Psoas muscle (tissue), 8 donors: ENCODE measurements at regions of chr1 and their contacts with region 1.

Region 1: DNA sequence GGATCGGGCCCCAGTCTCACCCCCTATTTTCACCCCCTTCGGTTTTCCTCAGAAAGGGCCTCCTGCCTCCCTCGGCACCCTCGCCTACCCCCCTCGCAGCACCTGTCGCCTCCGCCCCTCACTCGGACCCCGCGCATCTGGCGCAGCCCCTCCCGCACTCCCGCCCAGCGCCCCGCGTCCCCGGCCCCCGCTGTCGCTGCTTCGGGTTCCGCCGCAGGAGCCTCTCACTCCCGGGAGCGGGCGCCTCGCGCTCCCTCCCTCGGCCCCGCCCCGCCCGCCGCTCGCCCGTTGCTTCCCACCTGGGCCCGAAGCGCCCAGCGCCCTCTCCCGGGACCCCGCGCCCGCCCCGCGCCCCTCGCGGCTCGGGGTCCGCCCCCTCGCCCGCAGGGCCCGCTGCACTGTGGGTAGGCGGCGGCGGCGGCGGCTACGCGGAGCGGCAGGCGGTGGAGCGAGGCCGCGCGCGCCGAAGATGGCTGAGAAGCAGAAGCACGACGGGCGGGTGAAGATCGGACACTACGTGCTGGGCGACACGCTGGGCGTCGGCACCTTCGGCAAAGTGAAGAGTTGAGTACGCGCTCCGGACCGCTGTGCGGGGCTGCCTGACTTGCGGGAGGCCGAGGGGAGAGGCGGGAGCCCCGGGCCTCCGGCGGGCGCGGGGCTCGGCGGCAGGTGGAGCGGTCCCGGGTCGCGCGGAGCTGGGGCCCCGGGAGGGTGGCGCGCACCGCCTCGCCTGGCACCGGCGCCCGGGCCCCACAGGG is at the start of gene PRKAA2:
- DNase-seq: peak; percentile 49 to 81
- ATAC-seq: peak; percentile 75 to 87 (median 82)
- H3K4me3 ChIP-seq: peak within 1 kb of the TSS; percentile 82
- H3K27ac ChIP-seq: peak within 1 kb of the TSS; percentile 94
- H3K4me1 ChIP-seq: peaks cover 18% of the 10 kb centered on the region
- H3K27me3 ChIP-seq: no peaks in the 10 kb centered on the region
- CTCF ChIP-seq: no peak
- total RNA-seq, gene PRKAA2: 48.4 to 101 (median 63.0) TPM

Region 2: DNA sequence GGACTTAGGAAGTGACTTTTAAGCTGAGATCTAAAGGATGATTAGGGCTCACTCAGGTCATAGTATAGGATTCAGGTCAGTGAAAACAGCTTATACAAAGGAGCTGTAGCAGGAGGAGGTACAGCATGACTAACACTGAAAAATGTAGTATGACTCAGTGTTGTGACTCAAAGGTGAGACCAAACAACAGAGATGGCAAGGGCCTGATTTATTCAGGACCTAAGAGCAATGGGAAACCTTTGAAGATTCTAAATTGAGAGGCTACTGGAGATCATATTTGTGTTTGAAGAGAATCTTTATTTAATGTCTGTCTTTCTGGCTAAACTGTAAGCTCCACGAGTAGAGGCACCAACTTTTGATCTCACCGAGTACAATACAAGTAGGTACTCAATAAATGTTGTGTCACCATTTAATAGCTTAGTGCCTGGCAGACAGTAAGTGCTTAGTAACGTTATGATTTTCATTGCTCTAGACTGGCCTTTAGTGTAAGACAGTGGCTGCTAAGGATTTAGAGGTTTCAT is 43.5 kb after region 1 on chr1:
- intact Hi-C with region 1: loop called in 1 of 2 experiments (anchors 5 kb)
- DNase-seq: no peak
- ATAC-seq: peak; percentile 93 to 99 (median 97)
- H3K4me3 ChIP-seq: peak overlapping the region; percentile 6
- H3K27ac ChIP-seq: peak overlapping the region; percentile 78
- H3K4me1 ChIP-seq: peaks cover 33% of the 10 kb centered on the region
- H3K27me3 ChIP-seq: no peaks in the 10 kb centered on the region
- CTCF ChIP-seq: no peak

Region 3: DNA sequence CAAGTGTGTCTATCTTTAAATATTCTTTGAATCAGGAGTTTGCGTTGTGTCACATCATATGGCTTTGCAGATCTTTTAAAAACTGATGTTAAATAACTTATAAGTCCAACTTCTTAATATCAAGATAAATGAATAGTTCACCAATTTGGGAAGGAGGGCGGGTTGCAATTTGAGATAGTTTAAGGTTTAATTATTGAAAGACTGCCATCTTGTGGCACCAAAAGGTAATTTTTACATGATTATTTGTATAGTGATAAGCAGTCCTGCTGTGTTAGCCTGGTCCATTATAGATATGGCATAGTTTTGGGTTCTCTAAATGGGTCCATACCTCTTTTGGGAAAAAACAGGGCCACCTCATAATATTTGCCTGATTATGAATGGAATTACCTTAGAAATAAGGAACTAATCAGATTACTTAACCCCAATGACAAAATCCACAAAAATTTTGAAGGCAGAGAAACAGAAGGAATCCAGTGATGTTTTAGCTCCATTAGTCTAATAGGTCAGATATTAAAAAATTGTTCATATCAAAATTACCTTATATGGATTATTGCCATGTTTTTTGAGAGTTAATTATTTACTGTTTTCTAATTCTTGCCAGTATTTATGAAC is 64.3 kb after region 1 on chr1:
- intact Hi-C with region 1: loop called (anchors 5 kb)
- DNase-seq: no peak
- ATAC-seq: peak; percentile 57 to 81 (median 72)
- H3K4me3 ChIP-seq: no peak overlapping the region
- H3K27ac ChIP-seq: peak overlapping the region; percentile 14
- H3K4me1 ChIP-seq: peaks cover 4% of the 10 kb centered on the region
- H3K27me3 ChIP-seq: no peaks in the 10 kb centered on the region
- CTCF ChIP-seq: peak; percentile 73

Region 4: DNA sequence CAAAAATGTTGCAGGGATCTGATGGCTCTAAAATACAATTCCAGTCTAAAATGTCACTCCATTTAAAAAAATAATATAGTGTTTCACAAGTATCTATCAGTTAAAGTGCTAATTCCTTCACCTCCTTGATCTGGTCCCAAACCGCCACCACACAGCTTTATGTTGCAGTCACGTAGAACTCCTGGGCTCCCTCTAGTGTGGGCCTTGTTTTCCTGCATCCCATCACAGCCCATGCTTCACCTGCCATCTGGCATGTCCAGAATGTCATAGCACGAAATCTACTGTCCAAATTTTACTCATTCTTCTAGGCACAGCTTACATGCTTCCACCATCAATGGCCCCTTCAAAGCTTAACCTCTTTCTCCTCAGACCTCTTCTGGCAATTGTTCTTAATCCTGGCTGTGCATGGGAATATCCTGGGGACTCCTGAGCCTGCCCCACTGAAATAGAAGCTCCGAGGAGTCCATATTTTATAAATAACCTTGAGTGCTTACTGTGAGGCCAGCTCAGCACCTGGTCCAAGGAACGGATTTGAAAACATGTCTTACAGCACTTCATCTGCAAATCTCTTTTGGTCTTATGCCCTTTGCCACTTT is 158.6 kb after region 1 on chr1:
- intact Hi-C with region 1: no loop called
- DNase-seq: no peak
- ATAC-seq: peak in 2 of 4 donors; percentile 36 to 41
- H3K4me3 ChIP-seq: no peak overlapping the region
- H3K27ac ChIP-seq: no peak overlapping the region
- H3K4me1 ChIP-seq: peaks cover 25% of the 10 kb centered on the region
- H3K27me3 ChIP-seq: no peaks in the 10 kb centered on the region
- CTCF ChIP-seq: peak; percentile 36

Region 5: GRCh38 chr1:57040811-57041210 is 395.7 kb after region 1 on chr1:
- intact Hi-C with region 1: no loop called
- DNase-seq: no peak
- ATAC-seq: no peak
- H3K4me3 ChIP-seq: no peak overlapping the region
- H3K27ac ChIP-seq: no peak overlapping the region
- H3K4me1 ChIP-seq: no peaks in the 10 kb centered on the region
- H3K27me3 ChIP-seq: no peaks in the 10 kb centered on the region
- CTCF ChIP-seq: no peak

Region 6: GRCh38 chr1:57172040-57172439 is 526.9 kb after region 1 on chr1:
- intact Hi-C with region 1: no loop called
- DNase-seq: no peak
- ATAC-seq: no peak
- H3K4me3 ChIP-seq: no peak overlapping the region
- H3K27ac ChIP-seq: no peak overlapping the region
- H3K4me1 ChIP-seq: no peaks in the 10 kb centered on the region
- H3K27me3 ChIP-seq: no peaks in the 10 kb centered on the region
- CTCF ChIP-seq: no peak